MCF 10A (cell line): ENCODE measurements at regions of chr7 and their contacts with region 1.

Region 1: DNA sequence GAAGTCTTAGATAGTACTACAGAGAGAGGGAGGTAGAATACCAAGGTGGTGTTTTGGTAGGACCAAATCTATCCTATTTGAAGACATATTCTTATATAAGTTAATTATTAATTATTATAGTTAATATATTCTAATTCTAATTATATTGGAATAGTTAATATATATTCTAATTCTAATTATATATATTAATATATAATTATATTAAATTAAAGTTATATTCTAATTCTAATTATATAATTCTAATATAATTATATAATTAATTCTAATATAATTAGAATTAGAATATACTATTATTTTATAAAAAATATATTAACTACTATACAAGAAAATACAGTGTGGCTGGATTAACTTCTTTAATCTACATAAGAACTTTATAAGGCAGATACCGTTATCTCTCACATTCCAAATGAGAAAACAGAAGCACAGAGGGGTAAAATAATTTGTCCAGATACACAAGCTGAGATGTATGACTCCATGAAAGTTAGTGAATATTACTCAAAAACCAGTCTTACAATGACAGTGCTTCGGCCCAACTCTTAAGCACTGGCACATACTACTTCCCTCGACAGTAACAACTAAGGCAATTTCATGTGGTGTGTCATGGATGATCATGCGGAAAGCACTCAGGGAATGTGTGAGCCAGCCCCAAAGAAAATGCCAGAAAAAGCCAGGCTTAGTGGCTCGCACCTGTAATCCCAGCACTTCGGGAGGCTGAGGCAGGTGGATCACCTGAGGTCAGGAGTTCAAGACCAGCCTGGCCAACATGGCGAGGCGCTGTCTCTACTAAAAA is 42.6 kb downstream of the TYW1B start:
- DNase-seq: no peak
- H3K4me3 Mint-ChIP-seq: no peak overlapping the region
- H3K27ac Mint-ChIP-seq: peak overlapping the region; percentile 83
- H3K4me1 Mint-ChIP-seq: peaks cover 10% of the 10 kb centered on the region
- H3K27me3 Mint-ChIP-seq: no peaks in the 10 kb centered on the region
- CTCF ChIP-seq: no peak

Region 2: GRCh38 chr7:71768450-71768849 is 1016.9 kb before region 1 on chr7:
- CTCF ChIA-PET with region 1: interaction called, 3 read pairs
- POLR2A ChIA-PET with region 1: no interaction called
- intact Hi-C with region 1: loop called (anchors 10 kb)
- DNase-seq: no peak
- H3K4me3 Mint-ChIP-seq: no peak overlapping the region
- H3K27ac Mint-ChIP-seq: no peak overlapping the region
- H3K4me1 Mint-ChIP-seq: no peaks in the 10 kb centered on the region
- H3K27me3 Mint-ChIP-seq: no peaks in the 10 kb centered on the region
- CTCF ChIP-seq: no peak

Region 3: GRCh38 chr7:72152161-72153131 is 632.9 kb before region 1 on chr7:
- CTCF ChIA-PET with region 1: no interaction called
- POLR2A ChIA-PET with region 1: no interaction called
- intact Hi-C with region 1: no loop called
- DNase-seq: no peak
- H3K4me3 Mint-ChIP-seq: no peak overlapping the region
- H3K27ac Mint-ChIP-seq: no peak overlapping the region
- H3K4me1 Mint-ChIP-seq: no peaks in the 10 kb centered on the region
- H3K27me3 Mint-ChIP-seq: no peaks in the 10 kb centered on the region
- CTCF ChIP-seq: no peak

Region 4: DNA sequence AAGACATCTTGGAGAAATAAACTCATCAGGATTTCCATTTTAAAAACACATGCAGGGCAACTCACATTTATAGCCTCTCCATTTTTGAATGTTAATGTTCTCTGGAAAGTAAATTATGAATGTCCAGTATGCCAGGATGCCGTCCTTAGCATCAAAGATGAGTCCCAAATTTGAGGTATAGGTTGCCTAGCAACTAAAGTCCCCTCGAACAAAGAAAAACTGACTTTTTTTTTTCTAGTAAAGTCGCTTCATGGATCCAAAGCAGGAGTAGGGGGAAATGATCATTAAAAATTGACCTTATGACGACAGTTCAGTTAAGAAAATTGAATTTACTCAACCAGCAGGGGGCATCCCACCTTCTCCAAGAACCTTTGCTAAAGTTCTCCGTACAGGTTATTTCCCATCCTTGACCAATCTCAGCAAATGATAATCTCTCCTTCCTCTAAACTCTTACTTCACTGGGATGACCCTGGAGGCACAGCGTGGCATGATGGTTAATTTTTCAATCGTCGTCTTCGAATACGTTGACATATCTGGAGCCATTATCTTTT is 601.6 kb before region 1 on chr7:
- CTCF ChIA-PET with region 1: interaction called, 5 read pairs
- POLR2A ChIA-PET with region 1: no interaction called
- intact Hi-C with region 1: loop called (anchors 5 kb)
- DNase-seq: no peak
- H3K4me3 Mint-ChIP-seq: no peak overlapping the region
- H3K27ac Mint-ChIP-seq: no peak overlapping the region
- H3K4me1 Mint-ChIP-seq: peaks cover 6% of the 10 kb centered on the region
- H3K27me3 Mint-ChIP-seq: no peaks in the 10 kb centered on the region
- CTCF ChIP-seq: peak; percentile 49

Region 5: GRCh38 chr7:72709909-72710308 is 75.5 kb before region 1 on chr7:
- CTCF ChIA-PET with region 1: no interaction called
- POLR2A ChIA-PET with region 1: no interaction called
- intact Hi-C with region 1: no loop called
- DNase-seq: no peak
- H3K4me3 Mint-ChIP-seq: no peak overlapping the region
- H3K27ac Mint-ChIP-seq: no peak overlapping the region
- H3K4me1 Mint-ChIP-seq: no peaks in the 10 kb centered on the region
- H3K27me3 Mint-ChIP-seq: no peaks in the 10 kb centered on the region
- CTCF ChIP-seq: no peak

Region 6: DNA sequence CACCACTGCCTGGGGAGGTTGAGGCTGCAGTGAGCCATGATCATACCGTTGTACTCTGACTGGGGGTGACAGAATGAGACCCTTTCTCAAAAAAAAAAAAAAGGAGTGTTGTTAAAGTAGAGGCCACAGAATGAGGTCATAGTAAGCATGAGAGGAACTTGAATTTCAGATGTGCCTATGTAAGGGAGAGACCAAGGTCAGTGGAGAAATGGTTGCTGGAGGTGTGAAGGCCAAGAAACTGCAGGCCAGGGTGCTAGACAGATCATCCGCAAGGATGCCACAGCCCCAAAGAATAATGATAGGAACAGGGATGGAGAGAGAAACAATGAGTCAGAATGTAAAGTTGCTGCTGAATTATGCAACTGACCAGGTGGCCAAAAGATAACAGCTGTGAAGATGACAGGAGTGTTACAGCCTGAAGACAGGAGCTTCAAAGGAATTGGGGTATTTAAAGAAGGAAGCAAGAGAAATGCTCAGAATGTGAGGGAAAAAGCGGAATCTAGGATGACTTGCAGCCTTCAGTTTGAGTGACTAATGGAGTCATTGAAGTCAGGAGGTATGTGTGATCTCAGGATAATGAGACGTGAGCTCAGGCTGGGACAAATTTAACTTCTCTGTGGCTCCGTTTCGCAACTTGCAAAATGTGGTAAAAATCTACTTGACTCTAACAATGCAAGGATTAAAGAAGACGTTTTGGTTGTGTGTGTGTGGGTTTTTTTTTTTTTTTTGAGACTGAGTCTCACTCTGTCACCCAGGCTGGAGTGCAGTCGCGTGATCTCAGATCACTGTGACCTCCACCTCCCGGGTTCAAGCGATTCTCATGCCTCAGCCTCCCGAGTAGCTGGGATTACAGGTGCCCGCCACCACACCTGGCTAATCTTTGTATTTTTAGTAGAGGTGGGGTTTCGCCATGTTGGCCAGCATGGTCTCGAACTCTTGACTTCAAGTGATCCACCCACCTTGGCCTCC is 20.4 kb after region 1 on chr7:
- CTCF ChIA-PET with region 1: no interaction called
- POLR2A ChIA-PET with region 1: no interaction called
- intact Hi-C with region 1: no loop called
- DNase-seq: no peak
- H3K4me3 Mint-ChIP-seq: no peak overlapping the region
- H3K27ac Mint-ChIP-seq: no peak overlapping the region
- H3K4me1 Mint-ChIP-seq: peaks cover 7% of the 10 kb centered on the region
- H3K27me3 Mint-ChIP-seq: no peaks in the 10 kb centered on the region
- CTCF ChIP-seq: no peak

Region 7: GRCh38 chr7:73606801-73607691 is 821.7 kb after region 1 on chr7:
- CTCF ChIA-PET with region 1: no interaction called
- POLR2A ChIA-PET with region 1: no interaction called
- intact Hi-C with region 1: no loop called
- DNase-seq: peak; percentile 51
- H3K4me3 Mint-ChIP-seq: no peak overlapping the region
- H3K27ac Mint-ChIP-seq: no peak overlapping the region
- H3K4me1 Mint-ChIP-seq: peaks cover 6% of the 10 kb centered on the region
- H3K27me3 Mint-ChIP-seq: no peaks in the 10 kb centered on the region
- CTCF ChIP-seq: peak; percentile 95